Naive thymus-derived CD8-positive, alpha-beta T cell (primary cell): ENCODE measurements at regions of chr18 and their contacts with region 1.

Region 1: GRCh38 chr18:35972197-35973052 is at the start of gene RMP24:
- DNase-seq: peak; percentile 88 to 95 (median 93)
- ATAC-seq: peak; percentile 85
- H3K4me3 Mint-ChIP-seq: peak within 1 kb of the TSS; percentile 86 to 98 (median 96)
- H3K27ac Mint-ChIP-seq: peak within 1 kb of the TSS; percentile 94 to 98 (median 97)
- H3K4me1 Mint-ChIP-seq: peaks cover 34 to 67% (median 65%) of the 10 kb centered on the region in 4 donors
- H3K27me3 Mint-ChIP-seq: peaks cover 0 to 1% (median 0%) of the 10 kb centered on the region in 5 donors

Region 2: DNA sequence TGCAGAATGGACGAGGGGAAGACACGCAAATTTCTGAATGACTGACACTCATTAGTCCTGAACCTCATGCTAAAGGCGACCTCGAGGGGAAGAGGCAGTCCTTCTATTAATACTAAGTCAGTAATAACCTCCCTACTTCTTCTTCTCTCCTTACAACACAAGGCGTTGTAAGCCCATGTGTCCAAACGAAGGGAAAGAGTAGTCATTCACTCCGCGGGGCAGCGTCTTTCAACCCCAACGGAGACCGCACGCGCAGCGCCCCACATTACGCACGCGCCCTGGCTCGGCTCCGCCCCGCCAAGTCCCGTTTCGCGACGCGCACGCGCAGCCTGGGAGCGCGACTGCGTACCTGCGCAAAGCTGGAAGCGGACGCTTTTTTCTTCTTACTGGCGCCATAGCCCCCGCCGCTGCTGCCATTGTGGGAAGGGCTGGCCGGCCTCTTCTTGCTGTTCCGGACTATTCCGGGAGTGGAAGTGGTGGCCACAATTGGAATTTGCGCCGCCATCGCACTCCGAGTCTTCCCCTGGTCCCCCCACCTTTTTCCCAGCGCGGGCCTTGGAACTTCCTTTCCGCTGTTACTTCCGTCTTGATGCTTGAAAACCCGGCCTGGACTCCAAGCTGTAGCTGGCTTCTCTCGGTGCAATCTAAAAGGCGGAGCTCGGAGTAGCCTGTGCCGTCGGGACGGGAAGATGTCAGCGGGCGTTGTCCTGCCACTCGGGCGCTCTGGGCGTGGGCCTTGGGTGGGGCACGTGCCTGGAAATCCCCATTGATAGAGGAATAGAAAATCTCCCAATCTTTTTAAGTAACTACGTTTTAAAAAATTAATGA is 474.8 kb before region 1 on chr18 and contains the start of gene INO80C:
- POLR2A ChIA-PET with region 1: interaction called, 17 read pairs
- DNase-seq: peak; percentile 85 to 95 (median 91)
- ATAC-seq: peak; percentile 89 to 94
- H3K4me3 Mint-ChIP-seq: peak within 1 kb of the TSS; percentile 92 to 100 (median 97)
- H3K27ac Mint-ChIP-seq: peak within 1 kb of the TSS; percentile 99 to 100 (median 100)
- H3K4me1 Mint-ChIP-seq: peaks cover 13 to 56% (median 45%) of the 10 kb centered on the region in 4 donors
- H3K27me3 Mint-ChIP-seq: peaks cover 0 to 2% (median 0%) of the 10 kb centered on the region in 5 donors
- polyA plus RNA-seq, gene INO80C: 18.7 to 21.1 (median 19.8) TPM

Region 3: DNA sequence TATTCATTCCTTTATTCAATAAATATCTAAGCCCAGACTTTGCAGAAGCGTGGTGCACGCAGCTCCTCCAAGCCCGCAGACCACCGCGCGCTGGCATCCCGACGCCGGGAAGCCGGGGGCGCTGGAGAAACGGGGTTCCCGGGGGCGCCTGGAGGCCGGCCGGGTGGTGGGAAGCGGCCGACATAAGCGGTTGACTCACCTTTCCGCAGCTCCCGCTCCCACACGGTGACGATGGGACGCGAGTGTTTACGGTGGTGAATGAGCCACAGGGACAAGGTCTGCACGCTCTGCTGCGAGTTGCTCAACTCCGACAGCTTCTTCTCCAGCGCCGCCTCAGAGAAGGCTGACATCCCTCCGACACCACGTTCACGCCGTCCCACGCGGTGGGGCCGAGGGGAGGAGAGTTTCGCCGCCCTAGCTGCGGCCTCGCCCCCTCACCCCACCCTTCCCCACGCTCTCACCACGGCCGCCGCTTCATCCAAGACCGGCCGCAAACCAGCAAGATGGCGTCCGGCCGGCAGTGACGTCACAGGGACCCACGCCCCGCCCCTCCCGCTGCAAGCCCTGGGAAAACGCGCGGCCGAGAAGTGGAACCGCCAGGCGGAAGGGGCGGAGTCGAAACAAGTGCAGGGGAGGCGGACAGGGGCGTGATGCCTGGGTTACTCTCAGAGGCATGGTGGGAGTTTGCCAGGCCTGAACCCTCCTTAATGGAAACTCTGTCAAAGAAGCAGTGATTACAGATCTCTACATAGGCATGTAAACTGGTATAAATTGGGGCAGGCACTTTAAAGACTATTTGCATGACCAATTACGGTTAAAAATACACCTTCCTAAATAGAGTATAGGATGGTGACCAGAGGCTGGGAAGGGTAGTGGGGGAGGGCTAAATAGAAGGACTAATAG is 94.9 kb after region 1 on chr18 and contains the start of gene RPRD1A:
- POLR2A ChIA-PET with region 1: interaction called, 14 read pairs
- DNase-seq: peak; percentile 90 to 98 (median 95)
- ATAC-seq: peak; percentile 91 to 94
- H3K4me3 Mint-ChIP-seq: peak within 1 kb of the TSS; percentile 91 to 97 (median 95)
- H3K27ac Mint-ChIP-seq: peak within 1 kb of the TSS; percentile 86 to 98 (median 96)
- H3K4me1 Mint-ChIP-seq: peaks cover 24 to 50% (median 45%) of the 10 kb centered on the region in 4 donors
- H3K27me3 Mint-ChIP-seq: no peaks in the 10 kb centered on the region
- polyA plus RNA-seq, gene RPRD1A: 6.7 to 12.0 (median 9.4) TPM

Region 4: DNA sequence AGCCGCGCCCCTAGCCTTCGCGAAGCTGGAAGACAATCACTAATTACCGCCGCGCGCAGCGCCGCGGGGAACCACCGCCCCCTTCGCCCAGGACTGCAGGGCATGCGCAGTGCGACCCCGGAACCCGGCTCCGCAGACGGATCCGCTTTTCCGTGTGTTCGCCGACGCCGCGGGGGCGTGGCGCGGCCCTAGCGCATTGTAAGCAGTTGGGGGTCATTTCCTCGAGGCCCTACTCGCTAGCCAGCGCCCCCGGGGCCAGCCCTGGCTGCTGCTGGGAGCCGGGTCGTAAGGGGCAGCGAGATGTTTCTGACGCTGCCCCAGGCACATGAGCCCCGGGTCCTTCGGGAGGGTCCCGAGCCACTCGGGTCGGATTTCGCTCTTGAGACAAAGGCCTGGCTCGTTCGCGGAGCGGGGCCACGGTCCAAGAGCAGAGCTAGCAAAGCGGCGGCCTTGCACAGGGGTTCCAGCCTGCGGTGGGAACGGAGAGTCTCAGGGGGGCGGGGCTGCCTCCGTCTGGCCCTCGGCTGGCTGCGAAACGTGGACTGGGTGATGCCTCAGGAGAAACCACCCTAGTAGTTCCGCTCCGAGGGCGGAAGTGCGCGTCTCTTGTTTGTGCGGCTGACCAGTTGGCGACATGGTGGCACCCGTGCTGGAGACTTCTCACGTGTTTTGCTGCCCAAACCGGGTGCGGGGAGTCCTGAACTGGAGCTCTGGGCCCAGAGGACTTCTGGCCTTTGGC is 157.0 kb after region 1 on chr18 and contains the starts of genes ELP2 and SLC39A6:
- POLR2A ChIA-PET with region 1: interaction called, 27 read pairs
- DNase-seq: peak; percentile 89 to 97 (median 96)
- ATAC-seq: peak; percentile 87 to 92
- H3K4me3 Mint-ChIP-seq: peak within 1 kb of the TSS; percentile 90 to 98 (median 94)
- H3K27ac Mint-ChIP-seq: peak within 1 kb of the TSS; percentile 92 to 99 (median 98)
- H3K4me1 Mint-ChIP-seq: peaks cover 24 to 72% (median 63%) of the 10 kb centered on the region in 4 donors
- H3K27me3 Mint-ChIP-seq: no peaks in the 10 kb centered on the region
- polyA plus RNA-seq, gene ELP2: 65.4 to 84.0 (median 68.2) TPM
- polyA plus RNA-seq, gene SLC39A6: 22.2 to 25.3 (median 23.0) TPM